Uterus (tissue), 4 donors: ENCODE measurements at regions of chr3 and their contacts with region 1.

Region 1: DNA sequence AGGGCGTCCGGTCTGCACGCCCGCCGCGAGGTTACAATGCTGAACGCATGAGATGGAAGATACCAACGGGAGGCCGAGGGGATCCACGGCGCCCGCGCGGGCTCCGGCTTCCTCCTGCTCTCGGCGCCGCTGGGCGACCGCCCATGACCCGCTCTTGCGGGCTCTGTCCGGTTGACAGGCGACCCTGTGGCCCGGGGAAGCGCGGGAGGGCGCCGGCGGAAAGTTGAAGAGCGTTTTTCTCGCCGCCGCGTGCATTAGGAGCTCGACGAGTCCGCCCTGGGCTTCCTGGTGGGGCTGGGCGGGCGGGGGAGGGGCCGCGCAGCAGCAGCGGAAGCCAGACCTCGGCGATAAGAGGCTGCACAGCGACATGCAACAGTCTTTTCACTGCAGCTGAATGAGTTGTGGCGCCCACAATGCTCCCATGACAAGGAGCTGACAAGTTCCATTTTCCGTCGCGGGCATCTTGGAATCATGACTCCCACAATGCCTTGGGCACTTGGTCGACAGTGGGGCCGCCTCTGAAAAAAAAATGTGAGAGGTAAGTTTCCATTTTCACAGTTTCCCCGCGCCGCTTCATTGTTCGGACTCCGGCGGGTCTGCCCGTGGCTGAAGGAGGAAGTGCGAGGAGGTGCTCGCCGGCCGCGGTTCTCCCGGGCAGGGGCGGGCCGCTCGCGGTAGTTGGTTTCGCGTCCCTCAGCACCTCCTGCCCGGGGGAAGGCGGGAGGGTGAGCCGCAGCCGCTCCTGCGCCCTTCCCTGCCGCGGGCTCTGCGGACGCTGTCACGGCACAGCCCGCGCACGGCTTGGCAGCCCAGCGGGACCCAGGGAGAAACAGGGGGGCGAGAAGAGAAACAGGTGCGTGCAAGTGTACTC is at the start of gene MBNL1:
- DNase-seq: peak; percentile 76 to 82
- H3K4me3 ChIP-seq: peak within 1 kb of the TSS; percentile 58 to 84
- H3K27ac ChIP-seq: peak within 1 kb of the TSS; percentile 98 to 99
- H3K4me1 ChIP-seq: no peaks in the 10 kb centered on the region
- H3K27me3 ChIP-seq: no peaks in the 10 kb centered on the region
- CTCF ChIP-seq: no peak
- POLR2A ChIP-seq: peak in 1 of 2 donors; percentile 14
- total RNA-seq, gene MBNL1: 219 to 470 (median 243) TPM

Region 2: DNA sequence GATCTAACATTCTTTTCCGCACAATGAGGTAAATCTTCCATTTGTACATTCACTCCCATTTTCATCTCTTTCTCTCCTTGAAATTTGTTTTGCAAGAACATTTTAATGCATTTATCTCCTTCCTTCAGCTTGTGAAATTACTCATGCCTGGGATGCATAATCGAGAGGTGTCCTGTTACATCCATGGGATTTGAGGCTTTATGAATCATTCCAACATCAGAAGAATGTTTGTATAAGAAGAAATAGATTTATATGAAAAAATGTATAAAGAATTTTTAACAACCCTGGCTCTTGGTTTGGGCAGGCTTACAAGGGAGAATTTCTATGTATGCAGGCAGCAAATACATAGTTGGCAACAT is 93.3 kb before region 1 on chr3:
- intact Hi-C with region 1: no loop called
- DNase-seq: no peak
- H3K4me3 ChIP-seq: no peak overlapping the region
- H3K27ac ChIP-seq: no peak overlapping the region
- H3K4me1 ChIP-seq: no peaks in the 10 kb centered on the region
- H3K27me3 ChIP-seq: no peaks in the 10 kb centered on the region
- CTCF ChIP-seq: no peak
- POLR2A ChIP-seq: no peak

Region 3: DNA sequence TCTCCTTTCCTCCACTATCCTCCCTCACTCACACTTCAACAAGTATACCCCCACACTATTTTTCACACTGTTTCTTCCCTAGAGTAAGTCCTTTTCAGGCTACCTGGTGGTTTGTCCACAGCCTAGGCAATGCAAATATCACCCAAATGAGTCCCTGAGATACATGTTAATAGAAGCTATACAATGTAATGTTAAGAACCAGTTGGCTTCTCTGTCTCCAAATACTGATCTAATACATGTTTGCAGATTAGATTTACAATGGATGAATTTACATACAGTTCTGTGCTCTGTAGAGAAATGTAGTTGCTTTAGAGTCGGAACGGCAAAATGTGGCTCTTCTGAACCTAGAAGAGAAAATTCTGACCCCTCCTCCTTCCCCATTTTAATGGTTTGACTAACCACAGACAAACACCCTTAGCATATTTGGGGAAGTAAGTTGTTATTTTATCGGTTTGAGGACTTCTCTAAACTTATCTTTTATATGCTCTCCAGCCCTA is 63.6 kb before region 1 on chr3:
- intact Hi-C with region 1: loop called (anchors 10 kb)
- DNase-seq: no peak
- H3K4me3 ChIP-seq: peak overlapping the region; percentile 5 to 24
- H3K27ac ChIP-seq: peak overlapping the region; percentile 83 to 94
- H3K4me1 ChIP-seq: peaks cover 0 to 10% of the 10 kb centered on the region in 2 donors
- H3K27me3 ChIP-seq: no peaks in the 10 kb centered on the region
- CTCF ChIP-seq: no peak
- POLR2A ChIP-seq: no peak

Region 4: GRCh38 chr3:152382312-152383135 is 113.7 kb after region 1 on chr3:
- intact Hi-C with region 1: no loop called
- DNase-seq: no peak
- H3K4me3 ChIP-seq: peak overlapping the region; percentile 17 to 24
- H3K27ac ChIP-seq: peak overlapping the region; percentile 74 to 80
- H3K4me1 ChIP-seq: peaks cover 0 to 17% of the 10 kb centered on the region in 2 donors
- H3K27me3 ChIP-seq: no peaks in the 10 kb centered on the region
- CTCF ChIP-seq: no peak
- POLR2A ChIP-seq: no peak